Activated CD4-positive, alpha-beta T cell treated with anti-CD3 and anti-CD28 coated beads for 36 hours (primary cell): ENCODE measurements at regions of chr19 and their contacts with region 1.

Region 1: GRCh38 chr19:4638828-4639530 is at the start of gene TNFAIP8L1:
- DNase-seq: peak; percentile 100
- ATAC-seq: peak; percentile 95
- H3K4me3 Mint-ChIP-seq: peak within 1 kb of the TSS; percentile 90
- H3K27ac Mint-ChIP-seq: peak within 1 kb of the TSS; percentile 97
- H3K4me1 Mint-ChIP-seq: peaks cover 26% of the 10 kb centered on the region
- H3K27me3 Mint-ChIP-seq: no peaks in the 10 kb centered on the region
- total RNA-seq, gene TNFAIP8L1: 14.1 to 15.4 TPM

Region 2: DNA sequence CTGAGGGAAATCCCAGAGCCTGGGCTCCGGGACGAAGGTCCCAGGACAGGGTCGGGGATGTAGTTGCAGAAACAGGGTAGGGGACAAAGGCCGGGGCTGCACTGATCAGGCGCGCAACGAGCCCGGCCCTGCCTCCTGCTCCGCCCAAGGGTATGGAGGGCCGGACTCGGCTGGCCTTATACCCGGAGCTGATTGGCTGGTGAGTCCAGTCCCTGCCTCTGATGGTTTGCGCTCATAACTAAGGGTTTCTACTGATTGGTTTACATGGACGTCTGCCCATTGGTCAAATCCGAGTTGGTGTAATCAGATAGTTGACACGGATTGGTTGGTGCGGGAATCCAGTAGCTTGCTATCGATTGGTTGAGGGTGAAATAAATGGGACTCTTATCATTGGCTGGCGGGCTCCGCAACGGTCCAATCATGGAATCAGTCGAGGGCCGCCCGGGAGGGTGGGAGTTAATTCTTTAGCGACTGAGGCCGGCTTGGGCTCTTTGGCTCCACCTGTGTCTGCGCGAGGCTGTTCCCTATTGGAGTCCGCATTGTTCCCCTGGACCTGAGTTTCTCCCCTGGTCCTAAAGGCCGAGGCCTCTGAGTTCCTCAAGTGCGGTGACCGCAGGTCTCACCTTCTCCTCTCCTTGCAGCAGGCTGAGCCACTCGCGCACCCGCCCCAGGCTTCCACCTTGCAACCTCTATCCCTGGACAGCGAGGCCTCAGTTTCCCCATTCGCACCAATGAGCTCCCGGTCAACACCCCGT is 296.2 kb before region 1 on chr19:
- CTCF ChIA-PET with region 1: no interaction called
- POLR2A ChIA-PET with region 1: no interaction called
- intact Hi-C with region 1: loop called in 1 of 2 experiments (anchors 1 kb)
- DNase-seq: peak; percentile 97
- ATAC-seq: peak; percentile 91
- H3K4me3 Mint-ChIP-seq: peak overlapping the region; percentile 89
- H3K27ac Mint-ChIP-seq: peak overlapping the region; percentile 93
- H3K4me1 Mint-ChIP-seq: peaks cover 17% of the 10 kb centered on the region
- H3K27me3 Mint-ChIP-seq: no peaks in the 10 kb centered on the region

Region 3: GRCh38 chr19:4524808-4525562 is 114.0 kb before region 1 on chr19:
- CTCF ChIA-PET with region 1: interaction called, 8 read pairs
- POLR2A ChIA-PET with region 1: no interaction called
- intact Hi-C with region 1: loop called in 1 of 2 experiments (anchors 1 kb)
- DNase-seq: peak; percentile 86
- ATAC-seq: peak; percentile 93
- H3K4me3 Mint-ChIP-seq: no peak overlapping the region
- H3K27ac Mint-ChIP-seq: no peak overlapping the region
- H3K4me1 Mint-ChIP-seq: no peaks in the 10 kb centered on the region
- H3K27me3 Mint-ChIP-seq: peaks cover 2% of the 10 kb centered on the region

Region 4: DNA sequence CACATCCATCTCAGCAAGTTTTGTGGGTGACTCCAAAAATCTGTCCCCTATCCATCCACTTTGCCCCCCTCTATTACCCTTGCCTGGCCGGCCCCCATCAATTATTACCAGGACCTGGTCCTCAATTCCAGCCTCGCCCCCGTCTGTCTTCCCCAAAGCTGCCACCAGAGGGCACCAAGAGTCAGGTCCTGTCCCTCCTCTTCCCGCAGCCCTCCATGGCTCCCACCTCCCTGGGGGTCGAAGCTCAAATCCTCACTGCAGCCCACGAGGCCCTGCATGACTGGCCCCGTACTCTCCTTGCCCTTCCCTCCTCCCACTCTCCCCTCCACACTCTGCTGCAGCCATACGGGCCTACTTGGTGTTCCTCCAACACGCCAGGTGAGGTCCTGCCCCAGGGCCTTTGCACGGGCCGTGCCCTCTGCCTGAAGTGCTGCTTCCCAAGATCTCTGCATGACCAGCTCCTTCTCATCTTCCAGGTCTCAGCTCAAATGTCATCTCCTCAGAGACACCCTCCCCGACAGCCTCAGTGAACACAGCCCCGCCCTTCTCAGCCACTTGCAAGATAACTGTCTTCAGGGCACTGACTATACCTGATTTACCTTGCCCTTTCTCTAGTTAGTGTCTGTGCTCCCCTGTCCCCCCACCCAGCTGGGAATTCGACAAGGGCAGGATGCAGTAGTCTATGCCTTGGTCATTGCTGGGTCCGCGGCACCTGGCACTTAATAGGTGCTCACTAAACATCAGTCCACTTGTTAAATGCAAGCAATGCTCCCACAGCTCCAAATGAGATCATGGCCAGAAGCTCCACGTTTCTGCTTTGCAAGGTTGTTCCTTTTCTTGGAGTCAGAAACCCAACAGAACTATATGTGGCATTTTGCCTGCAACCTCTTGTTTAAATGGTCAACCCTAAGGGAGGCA is 62.7 kb before region 1 on chr19:
- CTCF ChIA-PET with region 1: interaction called, 18 read pairs
- POLR2A ChIA-PET with region 1: no interaction called
- intact Hi-C with region 1: loop called (anchors 1 to 2 kb)
- DNase-seq: peak; percentile 85
- ATAC-seq: peak; percentile 61
- H3K4me3 Mint-ChIP-seq: peak overlapping the region; percentile 4
- H3K27ac Mint-ChIP-seq: no peak overlapping the region
- H3K4me1 Mint-ChIP-seq: peaks cover 8% of the 10 kb centered on the region
- H3K27me3 Mint-ChIP-seq: peaks cover 32% of the 10 kb centered on the region

Region 5: GRCh38 chr19:4791170-4792018 is 152.4 kb after region 1 on chr19 and contains the start of gene FEM1A:
- CTCF ChIA-PET with region 1: interaction called, 8 read pairs
- POLR2A ChIA-PET with region 1: no interaction called
- intact Hi-C with region 1: loop called in 1 of 2 experiments (anchors 1 kb)
- DNase-seq: peak; percentile 99
- ATAC-seq: peak; percentile 97
- H3K4me3 Mint-ChIP-seq: peak within 1 kb of the TSS; percentile 84
- H3K27ac Mint-ChIP-seq: peak within 1 kb of the TSS; percentile 85
- H3K4me1 Mint-ChIP-seq: peaks cover 40% of the 10 kb centered on the region
- H3K27me3 Mint-ChIP-seq: no peaks in the 10 kb centered on the region
- total RNA-seq, gene FEM1A: 9.2 to 10.6 TPM

Region 6: GRCh38 chr19:5011476-5012238 is 372.7 kb after region 1 on chr19:
- CTCF ChIA-PET with region 1: no interaction called
- POLR2A ChIA-PET with region 1: no interaction called
- intact Hi-C with region 1: no loop called
- DNase-seq: no peak
- ATAC-seq: no peak
- H3K4me3 Mint-ChIP-seq: no peak overlapping the region
- H3K27ac Mint-ChIP-seq: no peak overlapping the region
- H3K4me1 Mint-ChIP-seq: no peaks in the 10 kb centered on the region
- H3K27me3 Mint-ChIP-seq: no peaks in the 10 kb centered on the region

Region 7: GRCh38 chr19:5680437-5681368 is 1041.7 kb after region 1 on chr19 and contains the starts of genes HSD11B1L and MICOS13:
- CTCF ChIA-PET with region 1: no interaction called
- POLR2A ChIA-PET with region 1: no interaction called
- intact Hi-C with region 1: loop called in 1 of 2 experiments (anchors 1 kb)
- DNase-seq: peak; percentile 99
- ATAC-seq: peak; percentile 97
- H3K4me3 Mint-ChIP-seq: peak within 1 kb of the TSS; percentile 99
- H3K27ac Mint-ChIP-seq: peak within 1 kb of the TSS; percentile 94
- H3K4me1 Mint-ChIP-seq: peaks cover 20% of the 10 kb centered on the region
- H3K27me3 Mint-ChIP-seq: no peaks in the 10 kb centered on the region
- total RNA-seq, gene HSD11B1L: 2.0 to 3.2 TPM
- total RNA-seq, gene MICOS13: 50.9 to 52.1 TPM